Aorta (tissue), 5 donors: ENCODE measurements at regions of chr3 and their contacts with region 1.

Region 1: GRCh38 chr3:119669906-119670570 is 7.2 kb downstream of the COX17 start:
- DNase-seq: no peak
- ATAC-seq: no peak
- H3K4me3 ChIP-seq: no peak overlapping the region
- H3K27ac ChIP-seq: no peak overlapping the region
- H3K4me1 ChIP-seq: peaks cover 2 to 3% of the 10 kb centered on the region in 2 donors
- H3K27me3 ChIP-seq: no peaks in the 10 kb centered on the region

Region 2: GRCh38 chr3:119627461-119627860 is 42.6 kb before region 1 on chr3:
- intact Hi-C with region 1: no loop called
- DNase-seq: peak in 1 of 2 donors; percentile 80
- ATAC-seq: no peak
- H3K4me3 ChIP-seq: no peak overlapping the region
- H3K27ac ChIP-seq: peak overlapping the region in 1 of 2 donors; percentile 49
- H3K4me1 ChIP-seq: peaks cover 0 to 3% of the 10 kb centered on the region in 2 donors
- H3K27me3 ChIP-seq: no peaks in the 10 kb centered on the region

Region 3: DNA sequence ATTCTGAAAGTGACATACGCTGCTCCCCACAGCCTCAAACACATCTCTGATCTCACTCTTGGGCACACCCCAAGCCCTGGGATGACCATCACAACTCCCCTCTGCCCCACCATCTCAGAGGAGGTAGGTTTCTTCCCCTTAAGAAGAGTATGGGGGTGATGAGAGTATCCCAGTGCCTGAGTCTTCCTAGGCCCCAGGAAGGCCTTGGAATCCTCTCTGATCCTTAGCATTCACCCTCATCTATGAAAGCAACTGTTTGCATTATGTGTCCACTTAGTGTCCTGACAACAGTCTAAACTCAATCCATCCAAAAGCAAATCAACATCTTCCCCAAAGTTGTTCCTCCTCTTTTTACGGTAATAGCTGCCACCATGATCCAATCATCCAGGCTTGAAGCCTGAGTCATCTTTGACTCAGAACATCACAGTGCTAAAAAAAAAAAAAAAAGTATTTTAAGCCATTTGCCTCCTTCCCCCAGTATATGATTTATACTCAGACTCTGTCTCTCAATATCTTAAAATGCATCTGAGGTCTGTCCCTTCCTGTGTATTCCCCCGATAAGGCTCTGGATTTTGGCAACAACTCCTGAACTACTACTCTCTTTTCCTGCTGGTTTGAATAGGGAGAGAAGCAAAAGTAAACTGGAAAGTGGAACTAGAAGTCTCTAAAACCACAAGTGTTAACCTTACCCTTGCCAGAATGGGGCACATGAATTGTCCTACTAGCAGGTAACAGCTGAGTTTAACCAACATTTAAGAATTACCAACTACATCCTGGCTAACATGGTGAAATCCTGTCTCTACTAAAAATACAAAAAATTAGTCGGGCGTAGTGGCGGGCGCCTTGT is 32.1 kb before region 1 on chr3:
- intact Hi-C with region 1: loop called (anchors 5 kb)
- DNase-seq: no peak
- ATAC-seq: peak; percentile 68
- H3K4me3 ChIP-seq: no peak overlapping the region
- H3K27ac ChIP-seq: peak overlapping the region in 1 of 2 donors; percentile 55
- H3K4me1 ChIP-seq: no peaks in the 10 kb centered on the region
- H3K27me3 ChIP-seq: no peaks in the 10 kb centered on the region